IMR-90 (cell line): ENCODE measurements at regions of chr17 and their contacts with region 1.

Region 1: DNA sequence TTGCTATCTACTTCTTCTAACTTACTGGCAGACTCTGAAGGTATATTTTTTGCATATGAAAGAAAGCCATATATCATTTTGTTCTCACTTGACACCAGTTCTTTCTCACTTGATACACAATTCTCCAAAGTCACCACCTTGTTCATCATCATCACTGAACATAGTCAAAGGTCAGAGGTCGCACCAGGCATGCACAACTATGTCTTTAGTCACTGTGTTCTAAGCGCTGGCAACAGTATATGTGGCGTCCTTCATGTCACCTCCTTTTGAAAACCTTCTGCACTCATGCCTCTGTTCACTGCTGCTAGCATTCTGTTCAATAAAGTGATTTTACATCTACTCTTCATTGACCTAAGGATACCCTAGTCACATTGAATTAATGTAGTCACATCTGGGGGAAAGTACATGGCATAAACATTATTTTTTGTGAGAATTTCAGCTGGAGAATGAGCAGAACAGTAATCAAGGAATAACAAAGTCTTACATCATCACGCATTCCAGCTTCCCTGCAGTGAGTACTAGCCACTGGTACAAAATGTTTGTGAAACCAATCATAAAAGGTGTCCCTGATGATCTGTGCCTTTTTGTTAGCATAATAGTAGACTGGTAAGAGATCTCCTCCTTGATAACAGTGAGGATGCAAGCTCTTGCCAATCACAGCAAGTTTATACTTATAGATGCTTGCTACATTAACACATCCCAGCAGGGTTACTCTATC is 20.5 kb upstream of the TBX4 start:
- DNase-seq: peak; percentile 76
- ATAC-seq: peak; percentile 94
- H3K4me3 ChIP-seq: no peak overlapping the region
- H3K27ac ChIP-seq: no peak overlapping the region
- H3K4me1 ChIP-seq: peaks cover 3% of the 10 kb centered on the region
- H3K27me3 ChIP-seq: no peaks in the 10 kb centered on the region
- CTCF ChIP-seq: no peak
- POLR2A ChIP-seq: no peak
- RAD21 ChIP-seq: no peak

Region 2: DNA sequence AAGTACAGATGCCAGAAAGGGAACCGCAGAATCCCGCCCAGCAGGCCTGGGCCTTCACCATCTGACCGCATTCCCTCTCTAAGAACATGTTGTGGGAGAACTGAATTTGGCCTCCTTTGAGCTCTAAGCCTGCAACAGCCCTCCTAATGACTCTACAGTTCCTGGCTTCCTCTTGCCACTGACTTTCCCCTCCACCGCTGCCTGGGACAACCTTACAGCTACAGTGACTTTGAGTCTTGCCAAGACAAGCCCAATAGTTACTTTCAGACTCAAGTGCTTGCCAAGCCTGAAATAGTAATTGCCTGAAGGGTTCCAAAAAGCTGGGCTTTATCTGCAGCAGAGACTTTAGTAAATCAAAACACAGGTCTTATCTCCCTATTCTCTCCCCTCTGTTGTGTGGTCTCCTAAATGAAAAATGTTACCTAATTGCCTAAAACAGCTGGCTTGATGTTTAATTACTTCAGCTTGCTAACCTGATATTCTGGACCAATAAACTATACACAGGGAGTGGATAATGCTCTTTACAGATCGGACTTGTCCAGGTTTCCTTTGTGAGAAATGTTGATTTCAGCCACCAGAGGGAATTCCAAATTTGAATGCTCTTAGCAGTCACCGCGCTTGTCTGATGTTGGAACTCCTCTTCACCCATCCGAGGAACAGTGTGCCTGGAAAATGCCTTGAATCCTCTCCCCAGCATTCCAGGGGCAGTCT is 117.2 kb before region 1 on chr17:
- CTCF ChIA-PET with region 1: no interaction called
- POLR2A ChIA-PET with region 1: no interaction called
- dilution Hi-C with region 1: no loop called
- in situ Hi-C with region 1: no loop called
- intact Hi-C with region 1: no loop called
- DNase-seq: peak; percentile 60
- ATAC-seq: peak; percentile 35
- H3K4me3 ChIP-seq: no peak overlapping the region
- H3K27ac ChIP-seq: peak overlapping the region; percentile 39
- H3K4me1 ChIP-seq: peaks cover 18% of the 10 kb centered on the region
- H3K27me3 ChIP-seq: no peaks in the 10 kb centered on the region
- CTCF ChIP-seq: peak; percentile 29; the same call in 1 of the 2 replicates
- POLR2A ChIP-seq: no peak
- RAD21 ChIP-seq: peak; percentile 33

Region 3: DNA sequence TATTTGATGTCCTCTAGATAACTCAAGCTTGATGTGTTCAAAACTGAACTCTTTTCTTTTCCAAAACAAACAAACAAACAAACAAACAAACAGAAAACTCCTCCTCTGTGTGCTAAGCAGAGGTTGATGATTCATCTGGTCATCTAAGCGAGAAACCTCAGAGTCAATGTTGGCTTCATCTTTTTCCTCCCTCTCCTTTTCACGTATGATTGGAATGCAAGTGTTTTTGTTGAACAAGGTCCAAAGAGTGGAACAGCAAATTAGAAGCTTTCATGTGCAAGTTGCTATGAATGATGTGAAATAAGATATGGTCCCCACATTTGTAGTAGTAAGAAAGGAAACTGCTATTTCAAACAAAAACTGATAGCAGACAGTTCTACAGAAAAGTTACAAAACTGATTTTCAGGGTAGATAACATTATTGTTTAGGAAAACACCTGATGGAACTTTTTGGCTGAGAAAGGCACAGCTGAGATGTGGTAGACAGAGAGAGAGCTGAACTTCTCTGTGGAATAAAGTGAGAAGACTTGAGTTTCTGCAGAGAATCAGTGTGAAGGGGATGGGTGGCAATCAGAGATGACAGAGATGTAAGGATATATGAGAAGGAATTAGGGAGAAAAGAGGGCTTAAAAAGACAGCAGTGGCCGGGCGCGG is 73.1 kb after region 1 on chr17:
- CTCF ChIA-PET with region 1: no interaction called
- POLR2A ChIA-PET with region 1: no interaction called
- dilution Hi-C with region 1: no loop called
- in situ Hi-C with region 1: no loop called
- intact Hi-C with region 1: loop called (anchors 2 kb)
- DNase-seq: peak; percentile 96
- ATAC-seq: peak; percentile 92
- H3K4me3 ChIP-seq: no peak overlapping the region
- H3K27ac ChIP-seq: no peak overlapping the region
- H3K4me1 ChIP-seq: peaks cover 3% of the 10 kb centered on the region
- H3K27me3 ChIP-seq: peaks cover 3% of the 10 kb centered on the region
- CTCF ChIP-seq: no peak
- POLR2A ChIP-seq: no peak
- RAD21 ChIP-seq: no peak

Region 4: DNA sequence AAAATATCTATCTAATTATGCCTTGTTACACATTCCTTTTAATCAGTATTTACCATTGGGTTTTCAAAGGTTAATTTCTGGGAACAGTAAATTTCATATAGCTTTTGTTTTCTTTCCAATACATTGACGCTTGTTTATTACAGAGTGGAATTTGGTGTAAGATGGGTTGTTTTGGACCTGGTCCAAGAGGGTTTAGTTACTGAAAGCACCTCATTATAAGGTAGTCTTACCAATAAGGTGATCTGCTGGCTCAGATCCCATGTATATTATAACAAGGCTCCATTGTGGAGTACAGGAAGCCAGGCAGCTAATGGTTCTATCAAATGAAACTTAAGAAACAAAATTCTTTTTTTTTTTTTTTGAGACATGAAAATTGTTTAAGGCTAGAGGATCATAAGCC is 246.6 kb after region 1 on chr17:
- CTCF ChIA-PET with region 1: no interaction called
- POLR2A ChIA-PET with region 1: no interaction called
- dilution Hi-C with region 1: no loop called
- in situ Hi-C with region 1: no loop called
- intact Hi-C with region 1: no loop called
- DNase-seq: no peak
- ATAC-seq: no peak
- H3K4me3 ChIP-seq: no peak overlapping the region
- H3K27ac ChIP-seq: no peak overlapping the region
- H3K4me1 ChIP-seq: no peaks in the 10 kb centered on the region
- H3K27me3 ChIP-seq: no peaks in the 10 kb centered on the region
- CTCF ChIP-seq: no peak
- POLR2A ChIP-seq: no peak
- RAD21 ChIP-seq: no peak